Mammary epithelial cell (primary cell): ENCODE measurements at regions of chr9 and their contacts with region 1.

Region 1: DNA sequence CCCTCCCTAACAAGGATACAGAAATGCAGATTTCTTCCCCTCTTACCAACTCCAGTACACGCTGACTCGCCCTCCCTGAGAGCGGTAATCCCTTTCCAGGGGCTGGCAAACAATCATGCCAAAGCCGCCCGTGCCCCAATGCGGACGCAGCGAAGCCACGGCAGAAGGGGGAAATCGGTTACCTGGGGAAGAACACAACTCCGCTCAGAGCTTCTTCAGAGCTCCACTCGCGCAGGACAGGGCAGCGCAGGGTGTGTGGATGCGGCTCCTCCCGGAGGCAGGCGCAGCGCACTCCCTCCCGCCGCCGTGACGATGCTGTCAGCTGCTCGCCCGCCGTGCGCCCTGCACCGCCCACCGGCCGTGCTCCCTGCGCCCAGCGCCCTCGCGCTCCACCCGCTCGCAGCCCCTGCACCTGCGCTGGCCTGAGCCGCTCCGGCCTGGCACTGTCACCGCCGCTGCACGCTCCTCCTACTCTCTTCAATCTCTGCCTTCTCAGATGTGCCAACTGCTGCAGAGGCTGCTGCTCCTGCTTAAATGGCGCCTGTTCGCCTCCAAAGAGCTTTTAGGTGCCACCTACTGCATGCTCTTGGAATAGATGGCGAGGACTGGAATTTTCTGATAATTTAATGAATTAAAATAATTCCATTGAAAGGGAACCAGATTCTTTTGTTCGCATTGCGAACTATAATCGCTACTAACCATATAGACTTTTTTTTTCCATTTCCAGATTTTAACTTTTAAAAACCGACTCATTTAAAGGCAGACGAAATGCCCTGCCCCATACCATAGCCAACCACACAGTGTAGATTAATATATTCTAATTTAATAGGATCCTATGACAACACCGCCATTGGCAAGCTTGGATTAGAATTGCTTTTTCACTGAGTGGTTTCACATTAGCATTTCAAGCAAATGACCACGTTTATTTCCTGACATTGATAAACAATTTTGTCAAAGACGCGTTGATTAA is at the start of gene DIRAS2:
- DNase-seq: peak; percentile 59
- H3K4me3 ChIP-seq: peak within 1 kb of the TSS; percentile 30 to 55 (median 51)
- H3K27ac ChIP-seq: no peak within 1 kb of the TSS
- H3K4me1 ChIP-seq: peaks cover 5% of the 10 kb centered on the region
- H3K27me3 ChIP-seq: peaks cover 13% of the 10 kb centered on the region
- CTCF ChIP-seq: peak; percentile 30 to 59
- total RNA-seq, gene DIRAS2: not detected

Region 2: DNA sequence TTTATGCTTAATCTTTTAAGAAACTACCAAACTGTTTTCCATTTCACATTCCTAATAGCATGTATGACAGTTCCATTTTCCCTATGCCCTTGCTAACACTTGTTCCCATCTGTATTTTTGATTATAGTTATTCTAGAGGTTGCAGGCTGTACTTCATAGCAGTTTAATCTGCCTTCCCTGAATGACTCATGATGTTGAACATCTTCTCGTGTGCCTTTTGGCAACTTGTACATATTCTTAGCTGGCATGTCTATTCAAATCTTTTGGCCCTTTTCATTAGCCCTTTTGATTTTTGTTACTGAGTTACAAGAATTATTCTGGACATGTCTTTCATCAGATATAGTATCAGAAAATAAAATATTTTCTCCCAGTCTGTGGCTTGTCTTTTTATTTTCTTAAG is 320.6 kb before region 1 on chr9:
- CTCF ChIA-PET with region 1: no interaction called
- dilution Hi-C with region 1: no loop called
- in situ Hi-C with region 1: no loop called
- intact Hi-C with region 1: loop called (anchors 2 kb)
- DNase-seq: no peak
- H3K4me3 ChIP-seq: no peak overlapping the region
- H3K27ac ChIP-seq: no peak overlapping the region
- H3K4me1 ChIP-seq: no peaks in the 10 kb centered on the region
- H3K27me3 ChIP-seq: no peaks in the 10 kb centered on the region
- CTCF ChIP-seq: no peak

Region 3: DNA sequence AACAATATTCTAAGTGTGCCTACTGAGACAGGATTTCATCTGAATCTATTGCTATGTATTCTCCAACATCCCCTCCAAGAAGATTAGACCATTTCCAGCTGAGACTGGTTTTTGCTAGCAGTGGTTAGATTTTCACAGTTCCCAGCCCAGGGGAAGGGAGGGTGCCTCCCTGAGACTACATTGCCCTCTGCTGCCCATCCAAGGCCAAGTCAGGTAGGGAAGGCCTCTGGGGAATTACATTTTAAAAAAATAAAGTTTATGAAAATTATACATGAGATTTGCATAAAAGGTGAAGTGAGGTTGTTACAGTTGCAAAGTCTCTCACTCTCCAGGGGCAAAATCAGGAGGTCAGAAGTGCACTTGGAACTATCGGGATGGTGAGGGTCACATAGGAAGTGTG is 130.8 kb after region 1 on chr9:
- CTCF ChIA-PET with region 1: no interaction called
- dilution Hi-C with region 1: no loop called
- in situ Hi-C with region 1: no loop called
- intact Hi-C with region 1: no loop called
- DNase-seq: peak; percentile 9
- H3K4me3 ChIP-seq: no peak overlapping the region
- H3K27ac ChIP-seq: no peak overlapping the region
- H3K4me1 ChIP-seq: peaks cover 3% of the 10 kb centered on the region
- H3K27me3 ChIP-seq: no peaks in the 10 kb centered on the region
- CTCF ChIP-seq: peak; percentile 47 to 61

Region 4: GRCh38 chr9:91071185-91071990 is 428.5 kb after region 1 on chr9:
- CTCF ChIA-PET with region 1: no interaction called
- dilution Hi-C with region 1: no loop called
- in situ Hi-C with region 1: no loop called
- intact Hi-C with region 1: no loop called
- DNase-seq: peak; percentile 70
- H3K4me3 ChIP-seq: no peak overlapping the region
- H3K27ac ChIP-seq: no peak overlapping the region
- H3K4me1 ChIP-seq: peaks cover 5% of the 10 kb centered on the region
- H3K27me3 ChIP-seq: no peaks in the 10 kb centered on the region
- CTCF ChIP-seq: no peak